ENCODE measurements at regions of chr5 and their contacts with region 1.

Region 1: DNA sequence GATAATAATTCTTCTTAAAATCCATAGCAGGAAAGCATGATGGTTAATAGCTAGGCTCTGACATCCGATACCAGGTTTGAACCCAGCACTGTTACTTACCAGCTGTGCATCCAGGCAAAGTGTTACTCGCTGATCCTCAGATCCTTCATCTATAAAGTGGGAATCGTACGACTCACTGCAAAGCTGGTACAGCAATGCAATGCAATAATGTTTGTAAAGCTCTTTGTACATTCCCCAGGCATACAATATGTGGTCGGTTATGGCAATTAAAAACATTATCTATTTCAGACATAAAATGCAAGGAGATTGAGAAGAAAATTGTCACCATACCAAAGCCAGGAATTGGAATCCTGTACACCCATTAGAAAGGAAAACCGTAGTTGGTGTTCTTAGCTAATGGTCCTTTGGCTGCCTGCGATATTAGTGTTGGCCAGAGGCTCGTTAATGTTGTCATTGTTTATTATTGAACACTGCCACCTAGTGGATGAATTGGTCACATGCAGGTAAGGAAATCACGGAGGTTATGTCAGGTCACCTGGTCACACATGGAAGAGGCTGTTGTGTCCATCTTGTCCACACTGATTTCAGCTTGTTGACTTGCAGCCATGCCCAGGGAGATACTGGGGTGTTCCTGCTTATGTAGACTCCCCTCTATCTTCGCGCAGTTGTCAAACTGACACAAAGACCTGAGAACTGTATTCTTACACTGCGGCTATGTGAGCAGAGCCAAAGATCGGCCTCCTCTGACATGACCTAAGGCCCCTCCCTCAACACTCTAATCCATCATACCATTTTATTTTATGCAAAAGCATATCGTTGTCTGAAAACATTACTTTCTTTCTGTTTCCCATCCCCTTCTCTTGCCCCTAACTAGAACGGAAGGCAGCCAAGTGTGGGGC is 87.5 kb upstream of the PPP2R2B start:
- DNase-seq: peak in 33 of 42 donors; percentile 19 to 89 (median 66)

Region 2: GRCh38 chr5:145028626-145029025 is 1937.4 kb before region 1 on chr5:
- intact Hi-C with region 1: no loop called
- DNase-seq: no peak

Region 3: GRCh38 chr5:146541958-146542849 is 423.8 kb before region 1 on chr5:
- intact Hi-C with region 1: loop called (anchors 5 kb)
- DNase-seq: peak; percentile 73 to 91 (median 83)

Region 4: DNA sequence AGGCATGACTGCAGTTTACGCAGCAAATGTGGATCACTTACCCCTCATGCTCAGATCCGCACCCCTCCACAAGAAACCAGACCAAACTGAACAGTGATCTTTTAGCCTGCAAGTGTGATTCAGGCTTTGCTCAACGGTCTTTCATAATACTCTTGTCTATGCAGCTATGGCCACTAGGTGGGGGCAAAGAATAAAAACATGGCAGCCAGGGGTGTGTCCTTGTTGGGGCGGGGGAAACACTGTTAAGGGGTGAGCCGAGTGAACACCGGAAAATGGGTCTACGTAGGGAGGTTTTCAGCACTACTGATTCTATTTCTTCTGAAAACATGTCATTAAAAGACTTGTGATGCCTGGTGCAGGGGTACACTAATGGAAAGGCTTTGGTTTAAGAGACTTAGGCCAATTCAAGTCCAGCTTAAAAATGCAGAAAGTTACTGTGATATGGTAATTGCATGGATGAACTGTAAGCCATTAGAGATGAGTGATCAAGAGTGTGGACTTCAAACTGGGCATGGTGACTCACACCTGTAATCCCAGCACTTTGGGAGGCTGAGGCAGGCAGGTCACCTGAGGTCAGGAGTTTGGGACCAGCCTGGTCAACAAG is 400.1 kb before region 1 on chr5:
- intact Hi-C with region 1: loop called (anchors 10 kb)
- DNase-seq: peak; percentile 32 to 87 (median 68)

Region 5: DNA sequence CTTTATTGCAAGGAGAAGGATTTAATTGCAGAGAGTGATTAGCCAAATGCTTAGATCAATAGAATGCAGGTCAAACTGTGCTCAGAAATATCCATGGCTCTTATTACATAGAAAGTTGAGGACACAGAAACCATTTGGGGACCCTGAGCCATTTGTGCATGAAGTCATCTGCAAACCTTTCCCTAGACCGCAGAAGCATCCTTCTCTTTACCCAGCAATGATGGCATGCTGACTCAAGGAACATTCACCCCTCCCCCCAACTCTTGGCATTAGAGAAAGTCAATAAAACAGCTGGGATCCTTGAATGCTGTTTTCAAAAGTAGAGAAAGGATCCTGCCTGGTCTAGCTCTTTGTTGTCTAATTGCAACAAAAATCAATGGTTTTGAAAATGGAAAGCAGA is 160.9 kb before region 1 on chr5:
- intact Hi-C with region 1: no loop called
- DNase-seq: no peak

Region 6: GRCh38 chr5:147188200-147189108 is 222.4 kb after region 1 on chr5:
- intact Hi-C with region 1: loop called (anchors 5 kb)
- DNase-seq: peak in 38 of 42 donors; percentile 20 to 94 (median 68)